Activated CD4-positive, alpha-beta T cell treated with anti-CD3 and anti-CD28 coated beads, Interleukin-2, amount 10 ng/mL, durations not matched to agents 7 days and 5 days (primary cell): ENCODE measurements at regions of chr17 and their contacts with region 1.

Region 1: DNA sequence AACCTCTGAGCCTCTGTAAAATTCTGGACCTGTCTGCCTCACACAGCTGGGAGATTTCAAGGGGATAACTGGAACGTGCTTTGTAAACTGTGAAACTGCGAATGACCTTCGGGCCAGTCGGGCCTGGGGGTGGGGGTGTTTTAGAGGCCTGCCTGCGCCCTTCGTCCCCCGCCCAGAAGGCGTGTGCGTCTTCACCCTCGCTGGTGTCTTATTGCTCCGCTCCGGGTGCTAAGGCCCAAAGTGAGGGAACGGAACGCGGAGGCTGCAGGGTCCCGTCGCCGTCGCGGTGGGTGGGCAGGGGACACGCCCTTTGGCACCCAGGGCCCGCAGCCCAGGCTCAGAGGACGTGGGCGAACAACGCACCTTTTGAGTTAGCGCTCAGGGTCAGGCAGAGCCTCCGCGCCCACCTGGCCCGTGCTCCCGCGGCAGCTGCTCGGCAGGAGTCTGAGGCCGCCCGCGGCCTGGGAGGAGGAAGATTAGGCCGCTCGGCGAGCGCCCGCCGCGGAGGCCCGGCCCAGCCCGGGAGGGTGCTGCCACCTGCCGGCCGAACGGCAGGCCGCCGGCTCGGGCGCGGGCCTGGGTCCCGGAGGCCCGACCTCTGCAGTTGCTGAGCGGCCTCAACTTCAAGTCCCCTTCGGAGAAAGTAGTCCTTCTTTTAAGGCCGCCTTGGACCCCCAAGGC is 29.7 kb downstream of the DCAKD start:
- DNase-seq: peak; percentile 63
- H3K4me3 Mint-ChIP-seq: no peak overlapping the region
- H3K27ac Mint-ChIP-seq: no peak overlapping the region
- H3K4me1 Mint-ChIP-seq: peaks cover 21% of the 10 kb centered on the region
- H3K27me3 Mint-ChIP-seq: peaks cover 33% of the 10 kb centered on the region

Region 2: DNA sequence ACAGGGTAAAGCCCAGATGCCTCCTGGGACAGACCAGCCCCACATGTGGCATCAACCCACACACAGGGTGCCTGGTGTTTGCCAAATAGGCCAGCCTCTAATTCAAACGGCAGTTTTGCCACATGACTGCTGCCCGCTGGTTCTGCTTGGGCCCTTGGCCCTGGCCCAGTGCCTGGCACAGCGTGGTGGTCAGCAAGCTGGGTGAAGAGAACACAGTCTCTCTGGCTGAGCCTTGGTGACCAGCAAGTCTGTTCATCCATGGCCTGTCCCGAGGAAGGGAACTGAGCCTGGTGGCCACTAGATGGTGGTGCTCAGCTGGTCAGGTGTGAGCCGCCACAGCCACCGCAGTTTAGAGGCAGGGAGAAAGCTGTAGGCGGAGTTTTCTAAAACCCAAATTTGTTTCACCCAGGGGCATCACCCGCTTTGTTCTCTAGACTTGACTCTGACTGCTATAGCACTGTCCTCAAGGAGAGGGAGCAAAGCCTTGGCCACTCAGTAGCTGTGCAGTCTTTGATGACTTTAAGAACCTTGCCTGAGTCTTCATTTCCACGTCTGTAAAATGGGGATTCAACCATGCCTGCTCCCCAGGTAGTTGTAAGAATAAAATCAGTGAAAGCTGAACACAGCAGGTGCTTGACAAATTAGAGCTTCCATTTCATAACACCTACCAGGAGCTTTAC is 101.7 kb before region 1 on chr17:
- CTCF ChIA-PET with region 1: interaction called, 13 read pairs
- POLR2A ChIA-PET with region 1: interaction called, 3 read pairs
- DNase-seq: peak; percentile 66
- H3K4me3 Mint-ChIP-seq: no peak overlapping the region
- H3K27ac Mint-ChIP-seq: no peak overlapping the region
- H3K4me1 Mint-ChIP-seq: no peaks in the 10 kb centered on the region
- H3K27me3 Mint-ChIP-seq: peaks cover 19% of the 10 kb centered on the region

Region 3: GRCh38 chr17:45112559-45113423 is 91.0 kb after region 1 on chr17:
- CTCF ChIA-PET with region 1: no interaction called
- POLR2A ChIA-PET with region 1: no interaction called
- DNase-seq: no peak
- H3K4me3 Mint-ChIP-seq: no peak overlapping the region
- H3K27ac Mint-ChIP-seq: no peak overlapping the region
- H3K4me1 Mint-ChIP-seq: no peaks in the 10 kb centered on the region
- H3K27me3 Mint-ChIP-seq: no peaks in the 10 kb centered on the region